Mammary epithelial cell (primary cell): ENCODE measurements at regions of chr14 and their contacts with region 1.

Region 1: DNA sequence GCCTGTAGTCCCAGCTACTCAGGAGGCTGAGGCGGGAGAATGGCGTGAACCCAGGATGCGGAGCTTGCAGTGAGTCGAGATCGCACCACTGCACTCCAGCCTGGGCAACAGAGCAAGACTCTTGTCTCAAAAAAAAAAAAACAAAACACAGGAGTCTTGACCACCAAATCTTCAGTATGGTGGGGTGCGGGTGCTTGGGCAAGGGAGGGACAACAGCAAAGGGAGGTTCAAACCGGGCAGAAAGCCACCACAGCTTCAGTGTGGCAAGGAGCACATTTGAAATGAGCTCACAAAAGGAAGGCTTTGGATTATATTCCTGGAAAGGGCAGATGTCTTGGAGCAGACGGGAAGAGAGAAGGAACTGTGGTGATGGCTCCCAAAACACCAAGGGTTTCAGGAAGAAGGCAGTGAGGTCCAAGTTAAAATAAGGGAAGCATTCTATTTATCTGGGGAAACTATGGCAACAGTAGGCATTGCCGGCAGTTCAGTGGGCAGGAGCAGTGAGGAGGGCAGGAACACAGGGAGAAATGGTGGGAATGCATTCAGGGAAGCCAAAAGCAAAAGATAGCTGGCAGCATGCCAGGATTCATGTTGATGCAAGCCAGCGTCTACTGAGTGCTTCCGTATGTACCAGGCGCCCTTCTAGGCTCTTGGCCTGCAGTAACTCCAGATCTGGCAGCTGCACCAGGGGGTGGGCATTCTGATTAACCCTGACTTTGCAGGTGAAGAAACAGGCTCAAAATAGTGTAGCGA is 51.0 kb upstream of the SRSF5 start:
- DNase-seq: peak; percentile 93
- H3K4me3 ChIP-seq: no peak overlapping the region
- H3K27ac ChIP-seq: peak overlapping the region; percentile 91
- H3K4me1 ChIP-seq: peaks cover 82% of the 10 kb centered on the region
- H3K27me3 ChIP-seq: no peaks in the 10 kb centered on the region
- CTCF ChIP-seq: no peak

Region 2: DNA sequence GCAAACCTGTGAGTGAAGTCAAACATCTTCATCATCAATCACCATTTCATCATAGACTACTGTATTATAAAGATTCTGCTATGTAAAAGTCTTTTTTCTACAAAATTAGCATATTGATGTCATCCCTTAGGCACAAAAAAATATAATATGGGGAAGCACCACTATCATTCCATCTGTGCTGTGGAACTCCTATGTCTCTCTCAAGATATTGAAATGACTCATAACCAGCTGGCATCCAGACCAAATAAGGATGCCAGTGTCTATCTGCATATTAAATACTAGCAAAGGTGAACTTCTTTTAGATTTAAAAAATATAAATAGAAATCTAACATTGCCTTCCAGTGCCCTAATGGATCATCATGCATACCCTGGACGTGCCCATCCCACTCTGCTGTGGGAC is 545.1 kb before region 1 on chr14:
- CTCF ChIA-PET with region 1: no interaction called
- dilution Hi-C with region 1: no loop called
- in situ Hi-C with region 1: no loop called
- intact Hi-C with region 1: no loop called
- DNase-seq: peak; percentile 31
- H3K4me3 ChIP-seq: no peak overlapping the region
- H3K27ac ChIP-seq: no peak overlapping the region
- H3K4me1 ChIP-seq: no peaks in the 10 kb centered on the region
- H3K27me3 ChIP-seq: peaks cover 2% of the 10 kb centered on the region
- CTCF ChIP-seq: no peak

Region 3: DNA sequence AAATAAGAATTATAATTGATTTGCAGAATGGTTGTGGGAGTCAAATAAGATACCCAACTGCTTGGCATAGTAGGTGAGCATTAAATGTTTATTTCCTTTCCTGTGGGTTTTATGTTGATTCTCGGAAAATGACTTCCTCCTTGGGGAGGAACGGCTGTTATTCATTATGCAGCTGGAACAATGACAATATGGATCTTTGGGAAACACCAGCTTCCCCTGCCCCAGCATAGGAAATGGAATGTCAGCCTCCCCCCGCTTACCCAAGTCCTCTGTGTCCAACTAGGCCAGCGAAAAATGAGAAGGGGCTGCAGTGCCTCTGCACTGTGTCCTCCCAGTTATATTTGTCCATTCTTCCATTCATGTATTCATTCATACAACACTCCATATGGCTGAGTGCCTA is 129.5 kb before region 1 on chr14:
- CTCF ChIA-PET with region 1: no interaction called
- dilution Hi-C with region 1: no loop called
- in situ Hi-C with region 1: no loop called
- intact Hi-C with region 1: loop called (anchors 2 kb)
- DNase-seq: no peak
- H3K4me3 ChIP-seq: no peak overlapping the region
- H3K27ac ChIP-seq: no peak overlapping the region
- H3K4me1 ChIP-seq: no peaks in the 10 kb centered on the region
- H3K27me3 ChIP-seq: no peaks in the 10 kb centered on the region
- CTCF ChIP-seq: no peak

Region 4: DNA sequence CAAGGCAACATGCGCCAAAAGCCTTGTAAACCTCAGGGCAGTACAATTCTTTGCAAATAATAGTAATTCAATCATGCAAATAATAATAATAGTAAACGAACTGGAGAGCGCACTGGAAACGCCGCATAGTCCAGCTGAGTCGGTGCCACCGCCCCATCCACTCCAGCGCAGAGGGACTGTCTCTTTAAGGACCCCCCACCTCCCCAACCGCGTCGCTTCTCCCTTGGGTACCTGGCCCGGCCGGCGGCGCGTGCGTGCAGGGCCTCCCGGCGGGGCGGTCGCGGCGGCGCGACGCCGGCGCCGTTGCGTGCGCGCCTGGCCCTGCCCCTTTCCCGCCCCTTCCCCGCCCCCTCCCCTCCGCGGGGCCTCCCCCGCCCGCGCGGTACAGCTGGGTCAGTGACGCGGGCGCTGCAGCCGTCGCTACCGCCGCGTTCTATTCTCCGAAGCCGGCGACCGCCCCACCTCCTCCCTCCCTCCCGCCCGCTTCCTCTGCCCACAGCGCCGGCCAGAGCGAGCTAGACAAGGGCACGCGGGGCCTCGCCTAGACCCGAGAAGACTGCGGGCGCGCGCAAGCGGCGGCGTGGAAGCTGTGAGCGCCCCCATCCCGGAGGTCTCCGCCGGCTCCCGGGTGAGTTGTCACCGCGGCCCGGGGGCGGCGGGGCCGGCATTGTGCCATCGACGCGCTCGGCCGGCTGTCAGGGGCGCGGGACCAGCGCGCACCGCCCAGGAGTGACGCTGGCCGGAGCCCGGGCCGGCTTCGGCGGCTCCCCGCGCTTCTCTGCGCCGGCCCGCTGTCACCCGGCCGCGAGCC is 104.5 kb before region 1 on chr14 and contains the start of gene SUSD6:
- CTCF ChIA-PET with region 1: no interaction called
- dilution Hi-C with region 1: no loop called
- in situ Hi-C with region 1: no loop called
- intact Hi-C with region 1: loop called (anchors 1 kb)
- DNase-seq: peak; percentile 83
- H3K4me3 ChIP-seq: peak within 1 kb of the TSS; percentile 78 to 82 (median 79)
- H3K27ac ChIP-seq: peak within 1 kb of the TSS; percentile 93
- H3K4me1 ChIP-seq: peaks cover 39% of the 10 kb centered on the region
- H3K27me3 ChIP-seq: no peaks in the 10 kb centered on the region
- CTCF ChIP-seq: no peak
- total RNA-seq, gene SUSD6: 34.8 to 45.6 TPM

Region 5: DNA sequence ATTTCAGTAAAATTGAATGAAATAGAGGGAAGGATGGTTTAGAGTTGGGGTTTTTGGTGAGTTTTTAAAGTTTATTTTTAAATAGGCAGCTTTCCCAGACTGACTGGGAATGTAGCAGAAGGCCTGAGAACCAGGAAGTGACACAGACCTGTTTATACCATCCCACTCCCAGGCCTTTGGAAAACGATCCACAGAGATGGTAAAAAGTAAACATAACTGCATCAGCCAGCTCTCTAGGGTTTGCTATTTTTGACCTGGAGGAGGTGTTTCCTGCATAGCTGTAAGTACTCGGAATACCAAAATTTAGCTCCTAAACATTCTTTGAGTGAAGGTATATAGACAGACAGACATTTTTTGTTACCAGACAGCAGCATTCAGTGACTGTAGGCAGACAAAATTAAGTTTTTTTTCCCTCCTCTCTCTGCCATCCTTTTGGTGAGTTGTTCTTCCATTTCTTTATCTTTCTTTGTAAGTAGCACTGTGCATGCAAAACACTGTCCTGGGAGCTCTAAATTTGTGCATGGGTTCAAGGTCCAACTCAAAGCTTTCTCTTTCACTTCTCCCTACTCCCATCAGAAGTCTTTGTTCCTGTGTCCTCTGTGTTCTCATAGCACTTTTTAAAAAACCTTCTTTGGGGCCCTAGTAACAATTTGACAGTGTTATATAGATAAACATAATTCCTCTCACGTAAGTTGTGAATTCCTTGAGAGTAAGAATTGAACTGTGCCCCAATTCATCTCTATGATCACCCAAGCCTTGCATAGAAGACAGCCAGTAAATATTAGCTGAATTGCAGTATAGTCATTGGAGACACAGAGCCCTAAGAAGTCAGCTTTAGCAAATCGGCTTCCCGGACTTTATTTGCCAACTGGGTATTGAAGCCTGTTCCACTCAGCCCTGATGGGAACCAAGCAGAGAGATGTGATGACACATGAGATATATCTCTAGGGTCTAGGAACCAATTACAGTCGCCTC is 67.1 kb before region 1 on chr14:
- CTCF ChIA-PET with region 1: no interaction called
- dilution Hi-C with region 1: loop called (anchors 5 kb)
- in situ Hi-C with region 1: no loop called
- intact Hi-C with region 1: no loop called
- DNase-seq: no peak
- H3K4me3 ChIP-seq: no peak overlapping the region
- H3K27ac ChIP-seq: no peak overlapping the region
- H3K4me1 ChIP-seq: peaks cover 67% of the 10 kb centered on the region
- H3K27me3 ChIP-seq: no peaks in the 10 kb centered on the region
- CTCF ChIP-seq: no peak

Region 6: DNA sequence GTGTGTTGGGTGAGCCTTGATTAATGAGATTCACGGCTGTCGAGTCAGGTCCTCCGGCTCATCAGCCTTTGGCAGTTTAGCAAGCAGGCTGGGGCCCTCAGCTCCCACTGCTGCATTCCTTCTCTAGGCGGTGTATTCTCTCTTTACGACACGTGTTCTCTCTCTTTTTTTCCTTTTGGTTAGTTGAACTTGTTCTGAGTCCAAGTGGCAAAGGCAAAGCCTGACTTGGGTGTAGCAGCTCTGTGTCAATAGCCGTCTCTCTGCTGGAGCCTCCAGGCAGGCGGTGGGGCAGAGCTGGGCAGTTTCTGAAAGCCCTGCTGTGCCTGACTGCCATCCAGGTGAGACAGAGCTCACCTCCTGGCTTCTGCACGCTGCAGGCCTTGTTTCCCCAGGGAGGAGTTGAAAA is 57.9 kb before region 1 on chr14:
- CTCF ChIA-PET with region 1: no interaction called
- dilution Hi-C with region 1: no loop called
- in situ Hi-C with region 1: no loop called
- intact Hi-C with region 1: loop called (anchors 2 kb)
- DNase-seq: peak; percentile 93
- H3K4me3 ChIP-seq: peak overlapping the region; percentile 13 to 24 (median 17)
- H3K27ac ChIP-seq: peak overlapping the region; percentile 80
- H3K4me1 ChIP-seq: peaks cover 62% of the 10 kb centered on the region
- H3K27me3 ChIP-seq: no peaks in the 10 kb centered on the region
- CTCF ChIP-seq: no peak

Region 7: DNA sequence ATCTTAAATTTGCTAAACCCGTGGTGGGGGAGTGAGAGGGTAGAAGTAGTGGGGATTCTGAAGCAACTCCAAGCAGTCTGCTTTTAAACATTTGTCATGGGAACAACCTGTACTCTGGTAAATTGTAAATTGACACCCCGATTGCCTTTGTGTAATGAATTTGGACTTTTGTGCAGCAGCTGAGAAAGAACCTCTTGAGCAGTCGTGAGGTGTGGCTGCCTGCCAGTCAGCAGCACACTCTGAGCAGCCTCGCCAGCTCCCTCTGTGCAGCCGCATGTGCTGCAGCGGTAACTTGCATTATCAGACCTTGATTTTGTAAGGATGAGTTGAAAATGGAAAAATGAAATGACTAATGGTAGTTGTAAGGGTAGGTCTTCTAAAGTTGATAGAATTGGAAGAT is 30.2 kb before region 1 on chr14:
- CTCF ChIA-PET with region 1: no interaction called
- dilution Hi-C with region 1: no loop called
- in situ Hi-C with region 1: no loop called
- intact Hi-C with region 1: loop called (anchors 1 kb)
- DNase-seq: peak; percentile 77
- H3K4me3 ChIP-seq: peak overlapping the region; percentile 1 to 17 (median 10)
- H3K27ac ChIP-seq: peak overlapping the region; percentile 94
- H3K4me1 ChIP-seq: peaks cover 45% of the 10 kb centered on the region
- H3K27me3 ChIP-seq: no peaks in the 10 kb centered on the region
- CTCF ChIP-seq: peak in 1 of 2 donors; percentile 20

Region 8: GRCh38 chr14:69772082-69773017 is 56.4 kb after region 1 on chr14:
- CTCF ChIA-PET with region 1: no interaction called
- dilution Hi-C with region 1: no loop called
- in situ Hi-C with region 1: no loop called
- intact Hi-C with region 1: no loop called
- DNase-seq: no peak
- H3K4me3 ChIP-seq: no peak overlapping the region
- H3K27ac ChIP-seq: no peak overlapping the region
- H3K4me1 ChIP-seq: peaks cover 12% of the 10 kb centered on the region
- H3K27me3 ChIP-seq: no peaks in the 10 kb centered on the region
- CTCF ChIP-seq: no peak